ENCODE measurements at regions of chr16 and their contacts with region 1.

Region 1: DNA sequence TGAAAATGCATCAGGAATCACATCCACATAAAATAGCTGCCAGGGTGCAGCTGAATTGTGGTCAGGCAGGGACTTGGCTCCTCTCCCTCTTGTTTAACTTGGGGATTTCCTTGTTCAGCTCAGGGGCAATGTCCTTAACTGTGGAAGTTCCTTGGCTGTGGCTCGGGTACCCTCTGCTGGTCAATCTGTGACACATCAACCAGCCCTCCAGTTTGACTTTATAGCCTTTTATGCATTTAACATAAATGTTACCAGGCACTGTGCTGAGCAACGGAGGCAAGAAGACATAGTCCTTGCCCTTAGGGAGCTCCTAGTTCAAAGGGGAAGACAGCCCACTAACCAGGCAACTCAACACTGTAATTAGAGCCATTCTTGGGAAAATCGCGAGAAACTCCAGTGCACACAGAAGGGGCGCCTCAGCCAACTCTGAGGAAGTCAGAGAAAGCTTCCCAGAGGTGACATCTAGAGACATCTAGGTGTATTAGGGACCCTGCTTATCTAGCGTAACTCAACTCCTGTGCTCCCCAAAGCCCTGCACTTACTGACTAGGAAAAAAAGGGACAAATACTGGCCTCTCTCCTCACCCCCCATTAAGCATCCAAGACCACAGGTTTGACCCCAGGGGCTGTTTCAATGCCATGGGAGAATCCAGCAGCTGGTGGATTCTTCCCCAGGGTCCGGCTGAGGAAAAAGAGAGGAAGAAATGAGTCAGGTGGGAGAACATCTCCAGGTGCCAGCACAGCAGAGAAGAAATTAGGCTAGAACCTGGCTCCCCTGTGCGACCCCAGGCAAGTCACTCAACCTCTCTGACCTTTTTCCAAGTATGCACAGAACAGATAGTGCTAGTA is 17.3 kb upstream of the EEF2K start:
- DNase-seq: peak; percentile 83
- H3K4me3 ChIP-seq: peak overlapping the region in 4 of 8 donors; percentile 67 to 93 (median 77)
- H3K27ac ChIP-seq: peak overlapping the region; percentile 92 to 100 (median 96)
- H3K4me1 ChIP-seq: peaks cover 29 to 48% (median 42%) of the 10 kb centered on the region in 6 donors
- H3K27me3 ChIP-seq: no peaks in the 10 kb centered on the region
- CTCF ChIP-seq: peak; percentile 74 to 88 (median 80)
- POLR2A ChIP-seq: no peak

Region 2: GRCh38 chr16:22077700-22078313 is 111.0 kb before region 1 on chr16:
- intact Hi-C with region 1: loop called (anchors 10 kb)
- DNase-seq: peak; percentile 81
- H3K4me3 ChIP-seq: no peak overlapping the region
- H3K27ac ChIP-seq: no peak overlapping the region
- H3K4me1 ChIP-seq: peaks cover 0 to 13% (median 0%) of the 10 kb centered on the region in 6 donors
- H3K27me3 ChIP-seq: no peaks in the 10 kb centered on the region
- CTCF ChIP-seq: peak; percentile 25 to 80 (median 67)
- POLR2A ChIP-seq: no peak

Region 3: GRCh38 chr16:22123146-22123545 is 65.7 kb before region 1 on chr16:
- intact Hi-C with region 1: no loop called
- DNase-seq: no peak
- H3K4me3 ChIP-seq: no peak overlapping the region
- H3K27ac ChIP-seq: no peak overlapping the region
- H3K4me1 ChIP-seq: no peaks in the 10 kb centered on the region
- H3K27me3 ChIP-seq: no peaks in the 10 kb centered on the region
- CTCF ChIP-seq: no peak
- POLR2A ChIP-seq: no peak